Astrocyte of the cerebellum (primary cell): ENCODE measurements at regions of chr6 and their contacts with region 1.

Region 1: DNA sequence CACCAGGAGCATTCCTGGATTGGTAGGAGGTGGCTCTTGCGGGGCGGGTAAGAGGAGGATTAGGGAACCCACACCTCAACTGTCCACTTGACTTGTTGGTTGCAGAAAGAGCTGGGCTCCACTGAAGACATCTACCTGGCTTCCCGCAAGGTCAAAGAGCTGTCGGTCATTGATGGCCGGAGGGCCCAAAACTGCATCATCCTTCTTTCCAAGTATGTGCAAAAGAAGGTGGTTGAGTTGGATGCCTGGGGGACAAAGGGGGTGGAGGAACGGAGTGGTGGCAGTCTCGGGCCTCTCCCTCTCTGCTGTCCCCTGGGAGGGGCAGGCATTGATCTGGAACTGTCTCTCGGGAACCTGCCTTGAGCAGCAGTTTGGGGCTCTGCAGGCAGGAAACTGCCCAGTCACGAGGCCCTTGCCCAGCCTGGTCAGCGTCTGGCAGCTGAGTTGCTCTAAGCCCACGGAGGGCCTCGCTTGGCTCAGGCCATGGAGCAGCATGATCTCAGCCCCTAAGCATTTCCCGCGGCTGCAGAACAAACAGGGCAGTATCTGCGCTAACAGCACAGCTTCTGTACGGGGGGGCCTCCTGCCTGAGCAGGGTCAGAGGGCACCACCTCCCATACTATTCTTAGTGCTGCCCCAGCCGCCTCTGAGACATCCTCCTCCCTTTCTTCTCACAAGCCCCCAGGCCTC is 46.7 kb downstream of the MOCS1 start:
- DNase-seq: peak; percentile 76
- H3K4me3 ChIP-seq: no peak overlapping the region
- CTCF ChIP-seq: no peak

Region 2: GRCh38 chr6:39228992-39229767 is 658.3 kb before region 1 on chr6 and contains the start of gene KCNK5:
- in situ Hi-C with region 1: no loop called
- DNase-seq: no peak
- H3K4me3 ChIP-seq: peak within 1 kb of the TSS; percentile 31
- CTCF ChIP-seq: peak; percentile 13

Region 3: DNA sequence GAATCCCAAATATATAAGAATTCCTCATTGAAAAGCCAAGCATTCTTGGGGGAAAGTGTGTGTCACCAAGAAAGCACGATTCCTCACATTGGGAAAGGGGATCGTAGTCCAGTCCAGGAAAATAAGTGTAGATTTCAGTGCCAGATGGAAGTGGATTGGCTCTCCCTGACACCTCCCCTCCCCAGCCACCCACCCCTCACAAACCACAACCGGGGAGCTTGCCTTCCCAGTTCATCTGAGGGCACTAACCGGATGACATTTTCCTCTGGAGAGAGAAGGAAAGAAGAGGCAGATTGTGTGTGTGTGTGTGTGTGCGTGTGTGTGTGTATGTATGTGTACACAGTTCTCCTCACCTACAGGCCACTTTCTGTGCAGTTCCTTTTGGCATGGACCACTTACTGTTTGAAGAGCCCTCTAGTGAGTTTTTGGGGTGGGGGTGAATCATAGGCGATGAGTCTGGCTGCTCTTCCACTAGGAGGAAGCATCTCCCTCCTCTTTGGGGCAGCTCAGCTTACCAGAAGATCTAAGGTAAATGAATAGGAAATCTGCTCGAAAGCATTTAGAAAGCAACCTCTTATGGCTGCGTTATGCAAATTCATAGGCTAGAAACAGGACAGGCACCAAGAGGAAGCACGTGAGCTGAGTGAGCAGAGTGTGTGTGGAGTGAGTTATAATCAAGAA is 74.5 kb before region 1 on chr6:
- in situ Hi-C with region 1: loop called (anchors 10 kb)
- DNase-seq: peak; percentile 37
- H3K4me3 ChIP-seq: no peak overlapping the region
- CTCF ChIP-seq: peak; percentile 30

Region 4: DNA sequence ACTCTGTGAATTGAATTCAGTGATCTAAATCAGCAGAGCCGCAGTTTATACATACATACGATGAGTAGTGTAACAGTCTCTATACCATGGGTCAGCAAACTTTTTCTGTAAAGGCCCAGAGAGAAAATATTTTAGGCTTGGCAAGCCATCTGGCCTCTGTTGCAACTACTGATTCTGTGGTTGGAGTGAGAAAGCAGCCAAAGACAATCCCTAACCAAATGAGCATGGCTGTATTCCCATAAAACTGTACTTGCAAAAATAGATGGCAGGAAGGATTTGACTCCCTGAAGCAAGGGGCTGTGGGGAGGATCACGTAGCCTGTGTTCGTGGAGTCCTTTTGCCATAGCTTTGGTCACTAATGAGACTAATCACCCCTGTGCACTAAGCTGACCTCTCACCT is 64.6 kb after region 1 on chr6:
- in situ Hi-C with region 1: no loop called
- DNase-seq: peak; percentile 23
- H3K4me3 ChIP-seq: no peak overlapping the region
- CTCF ChIP-seq: no peak